Activated CD8-positive, alpha-beta memory T cell treated with anti-CD3 and anti-CD28 coated beads, Interleukin-2, amount 10 ng/mL, durations not matched to agents 7 days and 5 days (primary cell): ENCODE measurements at regions of chr5 and their contacts with region 1.

Region 1: DNA sequence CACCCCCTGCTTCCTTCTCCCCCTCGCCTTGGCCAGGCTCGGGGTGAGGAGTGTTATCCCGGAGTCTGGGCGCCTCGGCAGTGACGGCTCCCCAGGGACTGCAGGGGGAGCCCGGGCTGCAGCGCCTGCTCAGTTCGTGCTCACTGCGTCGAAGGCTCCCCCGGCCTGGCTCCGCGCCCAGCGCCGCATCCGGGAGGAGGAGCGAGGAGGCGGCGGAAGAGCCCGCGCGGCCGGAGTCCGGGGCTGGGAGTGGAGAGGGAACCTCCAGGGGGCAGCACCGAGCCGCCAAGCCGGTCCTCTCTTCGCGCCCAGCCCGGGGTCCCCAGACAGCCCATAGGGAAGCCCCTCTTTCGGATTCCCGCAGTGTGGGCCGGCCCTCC is 1.3 kb upstream of the EGR1 start:
- DNase-seq: peak; percentile 94
- ATAC-seq: peak; percentile 48
- H3K4me3 Mint-ChIP-seq: peak overlapping the region; percentile 83
- H3K27ac Mint-ChIP-seq: peak overlapping the region; percentile 94
- H3K4me1 Mint-ChIP-seq: peaks cover 29% of the 10 kb centered on the region
- H3K27me3 Mint-ChIP-seq: peaks cover 15% of the 10 kb centered on the region

Region 2: DNA sequence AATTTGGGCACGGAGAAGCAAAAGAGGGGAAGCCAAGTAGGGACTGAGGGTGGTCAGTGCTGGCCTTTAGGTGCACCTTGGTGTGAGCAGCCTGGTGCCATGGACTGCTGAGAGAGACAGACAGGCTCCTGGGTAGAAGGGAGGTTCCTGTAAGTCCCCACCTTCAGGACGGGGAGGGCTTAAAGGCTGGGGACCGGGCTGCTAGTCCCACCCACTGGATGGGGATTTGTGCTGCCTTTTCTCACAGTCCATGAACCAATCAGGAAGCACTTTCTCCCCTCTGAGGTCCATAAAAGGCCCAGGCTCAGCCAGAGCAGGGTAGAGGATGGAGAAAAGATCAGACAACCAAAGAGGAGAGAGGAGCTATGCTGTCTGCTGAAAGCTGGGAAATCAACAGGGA is 147.6 kb before region 1 on chr5:
- CTCF ChIA-PET with region 1: no interaction called
- DNase-seq: no peak
- ATAC-seq: no peak
- H3K4me3 Mint-ChIP-seq: no peak overlapping the region
- H3K27ac Mint-ChIP-seq: no peak overlapping the region
- H3K4me1 Mint-ChIP-seq: no peaks in the 10 kb centered on the region
- H3K27me3 Mint-ChIP-seq: no peaks in the 10 kb centered on the region

Region 3: GRCh38 chr5:138449501-138450239 is 14.3 kb before region 1 on chr5:
- CTCF ChIA-PET with region 1: interaction called, 100 read pairs
- DNase-seq: peak; percentile 84
- ATAC-seq: peak; percentile 95
- H3K4me3 Mint-ChIP-seq: no peak overlapping the region
- H3K27ac Mint-ChIP-seq: no peak overlapping the region
- H3K4me1 Mint-ChIP-seq: peaks cover 4% of the 10 kb centered on the region
- H3K27me3 Mint-ChIP-seq: peaks cover 2% of the 10 kb centered on the region

Region 4: GRCh38 chr5:138498376-138498775 is 34.4 kb after region 1 on chr5:
- CTCF ChIA-PET with region 1: interaction called, 54 read pairs
- DNase-seq: no peak
- ATAC-seq: no peak
- H3K4me3 Mint-ChIP-seq: no peak overlapping the region
- H3K27ac Mint-ChIP-seq: no peak overlapping the region
- H3K4me1 Mint-ChIP-seq: no peaks in the 10 kb centered on the region
- H3K27me3 Mint-ChIP-seq: peaks cover 13% of the 10 kb centered on the region

Region 5: DNA sequence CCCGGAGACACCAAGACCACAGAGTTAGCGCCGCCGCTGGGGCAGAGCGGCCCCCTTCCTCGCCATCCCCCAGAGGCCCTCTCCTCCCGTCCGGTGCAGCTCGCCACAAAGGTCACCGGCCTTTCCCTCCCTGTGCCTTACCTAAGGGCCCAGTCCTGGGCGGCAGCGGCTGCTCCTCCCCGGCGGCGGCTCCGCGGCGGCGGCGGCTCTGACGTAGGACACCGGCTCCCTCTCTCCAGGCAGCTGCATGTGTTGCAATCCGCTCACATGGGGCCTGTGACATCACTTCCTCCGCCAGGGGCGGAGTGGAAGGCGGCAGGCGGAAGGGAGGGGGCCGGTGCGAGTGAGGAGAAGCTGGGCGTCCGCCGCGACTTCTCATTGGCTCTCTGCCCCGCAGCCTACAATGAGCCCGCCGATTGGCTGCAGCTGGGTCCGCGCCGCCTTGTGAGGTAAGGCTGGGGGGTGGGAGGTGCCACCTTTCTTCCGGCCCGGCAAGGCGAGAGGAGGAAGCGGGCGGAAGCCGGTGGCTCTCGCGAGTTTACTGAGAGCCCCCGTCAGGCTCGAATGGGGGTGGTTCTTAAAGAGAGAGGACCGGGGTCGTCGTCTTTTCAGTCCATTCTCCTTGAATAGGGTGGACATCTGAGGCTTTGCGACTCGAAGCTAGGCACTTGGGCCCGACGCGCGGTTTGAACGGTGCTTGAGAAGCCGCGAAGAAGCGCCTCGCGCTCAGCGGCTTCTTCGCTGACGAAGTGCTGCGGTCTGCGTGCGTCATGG is 79.1 kb after region 1 on chr5 and contains the start of gene ETF1:
- CTCF ChIA-PET with region 1: interaction called, 22 read pairs
- DNase-seq: peak; percentile 100
- ATAC-seq: peak; percentile 89
- H3K4me3 Mint-ChIP-seq: peak within 1 kb of the TSS; percentile 97
- H3K27ac Mint-ChIP-seq: peak within 1 kb of the TSS; percentile 100
- H3K4me1 Mint-ChIP-seq: peaks cover 66% of the 10 kb centered on the region
- H3K27me3 Mint-ChIP-seq: no peaks in the 10 kb centered on the region
- total RNA-seq, gene ETF1: 92.2 to 134 TPM

Region 6: DNA sequence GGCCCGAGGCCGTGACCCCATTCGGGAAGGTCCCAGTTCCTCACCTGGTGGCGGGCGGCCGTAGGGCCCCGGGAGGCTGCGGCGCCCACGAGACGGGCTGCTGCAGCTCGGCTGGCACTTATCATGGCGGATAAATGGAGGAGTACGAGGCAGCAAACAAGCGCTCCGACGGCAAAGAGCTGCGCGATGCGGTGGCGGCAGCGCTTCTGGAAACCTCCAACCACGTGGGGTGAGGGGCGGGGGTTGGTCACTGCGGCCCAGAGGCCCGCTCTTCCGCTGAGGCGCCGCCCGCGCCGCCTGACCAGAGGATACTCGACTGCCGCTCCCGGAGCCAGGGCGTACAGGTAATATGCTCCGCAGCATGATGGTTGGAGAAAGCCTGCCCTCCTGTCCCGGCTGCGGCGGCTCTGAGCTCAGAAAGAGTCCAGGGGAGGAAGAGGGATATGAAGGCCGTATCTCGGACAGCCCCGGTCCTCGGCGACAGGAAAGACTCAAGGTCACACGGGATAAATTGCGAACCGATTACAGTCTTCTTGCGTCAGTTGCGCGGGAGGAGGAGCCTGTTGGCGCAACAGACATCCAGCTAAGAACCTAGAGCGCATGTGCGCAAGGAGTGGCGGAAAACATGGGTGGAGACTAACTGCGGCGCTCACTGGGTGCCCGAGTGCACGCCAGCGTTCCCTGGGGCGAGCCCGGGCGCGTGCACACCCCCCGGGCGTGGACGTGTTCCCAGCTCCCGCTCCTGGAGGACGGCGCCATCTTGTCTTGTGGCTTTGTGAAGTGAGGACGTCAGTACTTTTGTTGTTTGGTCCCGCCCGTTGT is 111.4 kb after region 1 on chr5 and contains the start of gene HSPA9:
- CTCF ChIA-PET with region 1: interaction called, 18 read pairs
- DNase-seq: peak; percentile 99
- ATAC-seq: peak; percentile 90
- H3K4me3 Mint-ChIP-seq: peak within 1 kb of the TSS; percentile 93
- H3K27ac Mint-ChIP-seq: peak within 1 kb of the TSS; percentile 98
- H3K4me1 Mint-ChIP-seq: peaks cover 35% of the 10 kb centered on the region
- H3K27me3 Mint-ChIP-seq: no peaks in the 10 kb centered on the region
- total RNA-seq, gene HSPA9: 208 to 309 TPM

Region 7: DNA sequence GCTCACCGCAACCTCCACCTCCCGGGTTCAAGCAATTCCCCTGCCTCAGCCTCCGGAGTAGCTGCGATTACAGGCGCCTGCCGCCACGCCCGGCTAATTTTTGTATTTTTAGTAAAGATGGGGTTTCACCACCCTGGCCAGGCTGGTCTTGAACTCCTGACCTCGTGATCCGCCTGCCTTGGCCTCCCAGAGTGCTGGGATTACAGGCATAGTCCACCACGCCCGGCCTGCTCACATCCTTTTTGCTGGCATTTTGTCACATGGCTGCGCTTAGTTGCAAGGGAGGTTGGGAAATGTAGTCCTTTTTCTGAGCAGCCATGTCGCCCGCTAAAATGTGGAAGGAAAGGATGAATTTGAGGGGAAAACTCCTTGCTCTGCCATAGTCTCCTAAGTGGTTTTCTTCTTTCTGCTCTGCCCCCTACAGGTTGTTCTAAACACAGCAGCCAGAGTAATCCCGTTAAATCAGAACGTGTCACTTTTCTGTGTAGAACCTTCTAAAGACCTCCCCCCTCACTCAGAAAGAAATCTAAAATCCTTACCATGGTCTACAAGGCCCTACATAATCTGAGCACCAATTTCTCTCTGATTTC is 169.0 kb after region 1 on chr5:
- CTCF ChIA-PET with region 1: no interaction called
- DNase-seq: no peak
- ATAC-seq: peak; percentile 49
- H3K4me3 Mint-ChIP-seq: no peak overlapping the region
- H3K27ac Mint-ChIP-seq: no peak overlapping the region
- H3K4me1 Mint-ChIP-seq: peaks cover 3% of the 10 kb centered on the region
- H3K27me3 Mint-ChIP-seq: peaks cover 34% of the 10 kb centered on the region